Mammary epithelial cell (primary cell): ENCODE measurements at regions of chr17 and their contacts with region 1.

Region 1: GRCh38 chr17:69607162-69607834 is 192.8 kb downstream of the MAP2K6 start:
- DNase-seq: peak; percentile 75
- H3K4me3 ChIP-seq: no peak overlapping the region
- H3K27ac ChIP-seq: peak overlapping the region; percentile 37
- H3K4me1 ChIP-seq: peaks cover 27% of the 10 kb centered on the region
- H3K27me3 ChIP-seq: no peaks in the 10 kb centered on the region
- CTCF ChIP-seq: peak; percentile 84 to 94

Region 2: DNA sequence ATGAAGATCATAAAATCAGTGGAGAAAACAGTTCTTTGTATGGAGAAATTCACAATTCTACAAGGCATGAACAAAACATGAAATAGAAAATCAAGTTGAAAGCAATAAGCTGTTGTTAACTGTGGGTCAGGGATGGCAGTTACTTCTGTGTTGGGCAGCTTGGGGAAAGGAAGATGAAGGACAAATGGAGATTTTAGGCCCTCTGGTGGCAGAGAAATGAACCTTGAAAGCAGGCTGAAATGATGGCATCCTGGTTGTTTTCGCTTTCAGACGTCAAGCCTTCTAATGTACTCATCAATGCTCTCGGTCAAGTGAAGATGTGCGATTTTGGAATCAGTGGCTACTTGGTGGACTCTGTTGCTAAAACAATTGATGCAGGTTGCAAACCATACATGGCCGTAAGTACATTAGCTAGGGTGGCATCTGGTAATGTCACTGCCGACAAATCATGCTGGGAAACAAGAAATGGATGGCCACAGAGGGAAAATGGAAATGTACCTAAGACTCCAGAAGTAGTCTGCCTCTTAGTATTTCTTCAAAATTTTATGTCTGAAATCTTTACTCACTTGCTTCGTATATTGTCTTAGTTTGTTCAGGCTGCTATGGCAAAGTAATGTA is 83.9 kb before region 1 on chr17:
- CTCF ChIA-PET with region 1: no interaction called
- dilution Hi-C with region 1: no loop called
- in situ Hi-C with region 1: no loop called
- intact Hi-C with region 1: loop called (anchors 1 kb)
- DNase-seq: peak; percentile 44
- H3K4me3 ChIP-seq: no peak overlapping the region
- H3K27ac ChIP-seq: no peak overlapping the region
- H3K4me1 ChIP-seq: no peaks in the 10 kb centered on the region
- H3K27me3 ChIP-seq: no peaks in the 10 kb centered on the region
- CTCF ChIP-seq: peak; percentile 72 to 85

Region 3: GRCh38 chr17:69723742-69724141 is 116.4 kb after region 1 on chr17:
- CTCF ChIA-PET with region 1: interaction called, 5 read pairs
- dilution Hi-C with region 1: no loop called
- in situ Hi-C with region 1: no loop called
- intact Hi-C with region 1: loop called (anchors 2 kb)
- DNase-seq: peak; percentile 19
- H3K4me3 ChIP-seq: no peak overlapping the region
- H3K27ac ChIP-seq: no peak overlapping the region
- H3K4me1 ChIP-seq: no peaks in the 10 kb centered on the region
- H3K27me3 ChIP-seq: no peaks in the 10 kb centered on the region
- CTCF ChIP-seq: peak; percentile 35 to 64

Region 4: GRCh38 chr17:69870091-69870530 is 262.8 kb after region 1 on chr17:
- CTCF ChIA-PET with region 1: interaction called, 4 read pairs
- dilution Hi-C with region 1: no loop called
- in situ Hi-C with region 1: no loop called
- intact Hi-C with region 1: loop called (anchors 2 kb)
- DNase-seq: peak; percentile 83
- H3K4me3 ChIP-seq: no peak overlapping the region
- H3K27ac ChIP-seq: peak overlapping the region; percentile 91
- H3K4me1 ChIP-seq: peaks cover 48% of the 10 kb centered on the region
- H3K27me3 ChIP-seq: no peaks in the 10 kb centered on the region
- CTCF ChIP-seq: no peak

Region 5: GRCh38 chr17:70100983-70101382 is 493.7 kb after region 1 on chr17:
- CTCF ChIA-PET with region 1: no interaction called
- dilution Hi-C with region 1: no loop called
- in situ Hi-C with region 1: no loop called
- intact Hi-C with region 1: loop called (anchors 5 kb)
- DNase-seq: no peak
- H3K4me3 ChIP-seq: no peak overlapping the region
- H3K27ac ChIP-seq: no peak overlapping the region
- H3K4me1 ChIP-seq: no peaks in the 10 kb centered on the region
- H3K27me3 ChIP-seq: no peaks in the 10 kb centered on the region
- CTCF ChIP-seq: peak; percentile 7 to 28

Region 6: GRCh38 chr17:70144260-70144846 is 537.1 kb after region 1 on chr17:
- CTCF ChIA-PET with region 1: interaction called, 5 read pairs
- dilution Hi-C with region 1: no loop called
- in situ Hi-C with region 1: no loop called
- intact Hi-C with region 1: loop called (anchors 1 kb)
- DNase-seq: peak; percentile 16
- H3K4me3 ChIP-seq: no peak overlapping the region
- H3K27ac ChIP-seq: no peak overlapping the region
- H3K4me1 ChIP-seq: no peaks in the 10 kb centered on the region
- H3K27me3 ChIP-seq: no peaks in the 10 kb centered on the region
- CTCF ChIP-seq: peak; percentile 55 to 66

Region 7: GRCh38 chr17:70552230-70552981 is 945.1 kb after region 1 on chr17:
- CTCF ChIA-PET with region 1: interaction called, 3 read pairs
- dilution Hi-C with region 1: no loop called
- in situ Hi-C with region 1: no loop called
- intact Hi-C with region 1: loop called (anchors 10 kb)
- DNase-seq: peak; percentile 18
- H3K4me3 ChIP-seq: no peak overlapping the region
- H3K27ac ChIP-seq: no peak overlapping the region
- H3K4me1 ChIP-seq: no peaks in the 10 kb centered on the region
- H3K27me3 ChIP-seq: no peaks in the 10 kb centered on the region
- CTCF ChIP-seq: peak; percentile 18 to 52